Activated CD4-positive, alpha-beta T cell treated with anti-CD3 and anti-CD28 coated beads for 36 hours (primary cell): ENCODE measurements at regions of chr19 and their contacts with region 1.

Region 1: DNA sequence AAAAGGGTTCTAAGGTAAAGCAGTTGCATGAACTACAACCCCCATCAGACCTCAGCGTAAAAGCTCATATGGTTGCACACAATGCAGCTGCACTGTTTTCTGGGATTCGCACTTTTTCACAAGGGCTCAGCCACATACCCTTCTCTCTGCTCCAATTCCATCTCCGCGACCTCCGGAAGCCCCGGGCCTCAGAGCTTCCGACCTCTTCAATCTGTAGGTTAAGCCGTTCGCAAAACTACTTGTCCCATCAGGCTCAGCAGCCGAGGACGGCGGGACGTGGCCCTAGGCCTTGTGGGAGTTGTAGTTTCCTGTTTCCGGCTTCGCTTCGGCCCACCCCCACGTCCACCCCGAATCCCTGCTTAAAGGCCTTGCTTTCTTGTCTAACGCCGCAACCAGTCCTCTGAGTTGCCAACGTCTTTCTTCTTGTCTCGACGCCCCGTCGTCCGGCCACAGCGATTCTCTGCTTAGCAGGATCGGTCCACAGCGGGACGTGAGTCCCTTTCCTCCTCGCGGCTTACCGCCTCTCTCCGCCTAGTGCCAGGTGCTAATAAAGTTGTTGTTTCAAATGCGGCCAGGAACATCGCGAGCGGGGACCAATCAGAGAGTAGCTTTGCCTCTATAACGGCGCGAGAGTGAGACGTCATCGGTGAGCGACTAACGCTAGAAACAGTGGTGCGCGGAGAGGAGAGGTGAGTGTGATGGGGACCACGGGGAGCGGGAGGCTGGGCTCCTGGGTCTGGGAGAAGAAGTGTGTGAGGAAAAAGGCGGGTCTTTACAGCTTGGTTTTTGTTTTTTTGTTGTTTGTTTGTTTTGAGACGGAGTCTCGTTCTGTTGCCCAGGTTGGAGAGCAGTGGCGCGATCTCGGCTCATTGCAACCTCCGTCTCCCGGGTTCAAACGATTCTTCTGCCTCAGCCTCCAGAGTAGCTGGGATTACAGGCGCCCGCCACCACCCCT is at the starts of genes PRPF31 and TFPT:
- DNase-seq: peak; percentile 97
- ATAC-seq: peak; percentile 94
- H3K4me3 Mint-ChIP-seq: peak within 1 kb of the TSS; percentile 83
- H3K27ac Mint-ChIP-seq: peak within 1 kb of the TSS; percentile 96
- H3K4me1 Mint-ChIP-seq: peaks cover 25% of the 10 kb centered on the region
- H3K27me3 Mint-ChIP-seq: no peaks in the 10 kb centered on the region
- total RNA-seq, gene PRPF31: 85.5 to 115 TPM
- total RNA-seq, gene TFPT: 28.5 to 39.3 TPM

Region 2: DNA sequence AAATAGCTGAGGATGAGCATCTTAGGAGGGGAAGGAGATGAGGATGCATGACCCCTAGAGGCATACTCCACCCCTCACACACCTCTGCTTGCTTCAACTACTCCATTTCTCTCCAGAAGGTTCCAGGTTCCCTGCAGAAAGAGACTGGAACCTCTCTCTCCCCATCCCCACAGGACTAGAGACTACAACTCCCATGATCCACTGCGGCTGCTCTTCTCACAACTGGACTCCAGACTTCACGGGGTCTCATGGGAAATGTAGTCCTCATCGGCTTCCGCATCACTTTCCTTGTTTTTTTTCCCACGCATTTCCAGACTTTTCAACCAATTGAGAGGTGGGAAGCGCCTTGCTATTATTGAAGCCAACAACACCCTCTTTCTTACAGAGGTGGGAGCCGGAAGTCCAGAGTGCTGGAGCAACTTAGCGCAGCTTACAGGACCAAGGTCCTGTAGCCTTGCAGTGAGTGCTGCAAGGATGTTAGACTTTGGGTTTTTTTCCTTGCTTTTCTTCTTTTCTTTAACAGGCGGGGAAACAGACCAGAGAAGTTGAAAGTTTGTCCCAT is 137.9 kb before region 1 on chr19:
- CTCF ChIA-PET with region 1: no interaction called
- POLR2A ChIA-PET with region 1: no interaction called
- intact Hi-C with region 1: loop called in 1 of 2 experiments (anchors 1 kb)
- DNase-seq: peak; percentile 79
- ATAC-seq: peak; percentile 61
- H3K4me3 Mint-ChIP-seq: peak overlapping the region; percentile 59
- H3K27ac Mint-ChIP-seq: no peak overlapping the region
- H3K4me1 Mint-ChIP-seq: peaks cover 30% of the 10 kb centered on the region
- H3K27me3 Mint-ChIP-seq: peaks cover 53% of the 10 kb centered on the region

Region 3: GRCh38 chr19:54281007-54281728 is 165.8 kb after region 1 on chr19 and contains the start of gene LILRB2:
- CTCF ChIA-PET with region 1: no interaction called
- POLR2A ChIA-PET with region 1: no interaction called
- intact Hi-C with region 1: no loop called
- DNase-seq: no peak
- ATAC-seq: no peak
- H3K4me3 Mint-ChIP-seq: no peak within 1 kb of the TSS
- H3K27ac Mint-ChIP-seq: no peak within 1 kb of the TSS
- H3K4me1 Mint-ChIP-seq: no peaks in the 10 kb centered on the region
- H3K27me3 Mint-ChIP-seq: peaks cover 39% of the 10 kb centered on the region
- total RNA-seq, gene LILRB2: not detected

Region 4: GRCh38 chr19:54448774-54449700 is 333.7 kb after region 1 on chr19 and contains the start of gene LENG8:
- CTCF ChIA-PET with region 1: no interaction called
- POLR2A ChIA-PET with region 1: no interaction called
- intact Hi-C with region 1: loop called in 1 of 2 experiments (anchors 1 kb)
- DNase-seq: peak; percentile 98
- ATAC-seq: peak; percentile 92
- H3K4me3 Mint-ChIP-seq: peak within 1 kb of the TSS; percentile 98
- H3K27ac Mint-ChIP-seq: peak within 1 kb of the TSS; percentile 98
- H3K4me1 Mint-ChIP-seq: peaks cover 36% of the 10 kb centered on the region
- H3K27me3 Mint-ChIP-seq: no peaks in the 10 kb centered on the region
- total RNA-seq, gene LENG8: 156 to 221 TPM